Activated CD4-positive, alpha-beta T cell treated with anti-CD3 and anti-CD28 coated beads for 36 hours (primary cell): ENCODE measurements at regions of chr7 and their contacts with region 1.

Region 1: GRCh38 chr7:25069900-25070443 is 55.1 kb downstream of the CYCS start:
- DNase-seq: peak; percentile 66
- ATAC-seq: peak; percentile 53
- H3K4me3 Mint-ChIP-seq: no peak overlapping the region
- H3K27ac Mint-ChIP-seq: no peak overlapping the region
- H3K4me1 Mint-ChIP-seq: peaks cover 12% of the 10 kb centered on the region
- H3K27me3 Mint-ChIP-seq: no peaks in the 10 kb centered on the region

Region 2: GRCh38 chr7:24812310-24812945 is 257.5 kb before region 1 on chr7:
- CTCF ChIA-PET with region 1: interaction called, 37 read pairs
- POLR2A ChIA-PET with region 1: interaction called, 3 read pairs
- intact Hi-C with region 1: loop called (anchors 1 kb)
- DNase-seq: peak; percentile 68
- ATAC-seq: peak; percentile 69
- H3K4me3 Mint-ChIP-seq: no peak overlapping the region
- H3K27ac Mint-ChIP-seq: no peak overlapping the region
- H3K4me1 Mint-ChIP-seq: no peaks in the 10 kb centered on the region
- H3K27me3 Mint-ChIP-seq: no peaks in the 10 kb centered on the region

Region 3: GRCh38 chr7:25028370-25029021 is 41.5 kb before region 1 on chr7:
- CTCF ChIA-PET with region 1: interaction called, 6 read pairs
- POLR2A ChIA-PET with region 1: no interaction called
- intact Hi-C with region 1: loop called (anchors 5 kb)
- DNase-seq: peak; percentile 50
- ATAC-seq: peak; percentile 89
- H3K4me3 Mint-ChIP-seq: peak overlapping the region; percentile 41
- H3K27ac Mint-ChIP-seq: peak overlapping the region; percentile 87
- H3K4me1 Mint-ChIP-seq: peaks cover 46% of the 10 kb centered on the region
- H3K27me3 Mint-ChIP-seq: no peaks in the 10 kb centered on the region